ENCODE measurements at regions of chr1 and their contacts with region 1.

Region 1: DNA sequence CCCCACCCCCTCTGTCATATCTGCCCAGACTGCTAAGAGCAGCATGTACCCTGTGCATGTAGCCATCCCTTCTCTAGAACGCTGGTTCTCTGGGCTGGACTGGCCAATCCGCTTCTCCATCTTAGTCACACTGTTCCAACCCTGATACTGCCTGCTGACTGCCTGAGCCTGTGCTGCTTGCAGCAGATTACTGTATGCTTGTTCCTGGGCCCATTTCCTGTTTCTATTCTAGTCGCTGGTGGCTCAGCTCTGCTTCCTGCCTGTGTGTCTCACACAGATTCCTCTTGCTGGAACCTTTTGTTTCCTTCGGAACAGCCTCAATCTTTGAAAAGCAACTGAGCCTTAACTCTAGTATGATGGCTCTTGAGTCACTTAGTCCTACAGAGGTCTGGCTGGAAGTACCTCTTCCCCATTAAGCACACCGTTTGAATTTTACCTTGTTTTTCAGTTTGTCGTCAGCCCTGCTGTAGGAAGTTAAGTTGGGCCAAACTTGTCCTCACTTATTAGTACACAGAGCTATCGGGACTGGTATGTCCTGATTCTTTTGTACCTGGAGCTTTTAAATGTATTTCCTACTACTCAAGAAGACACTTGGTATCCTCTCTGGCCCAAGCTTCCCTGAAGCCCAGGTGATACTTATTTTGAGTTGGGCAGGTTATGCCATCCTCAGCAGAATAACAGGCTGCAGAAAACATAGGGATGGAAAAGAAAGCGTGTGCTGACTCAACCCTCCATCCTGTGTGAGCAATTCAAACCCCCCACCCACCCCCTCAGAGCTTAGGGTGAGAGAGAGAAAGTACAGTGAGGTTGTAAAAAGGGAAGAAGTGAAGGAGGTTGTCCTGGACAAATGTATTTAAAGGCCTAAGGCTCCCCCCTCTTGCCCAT is 43.4 kb upstream of the PIGV start:
- DNase-seq: peak; percentile 53 to 96 (median 70)
- ATAC-seq: peak; percentile 94
- H3K4me3 ChIP-seq: peak overlapping the region; percentile 27
- H3K4me3 Mint-ChIP-seq: peak overlapping the region; percentile 57
- H3K27ac ChIP-seq: peak overlapping the region; percentile 72 to 80
- H3K27ac Mint-ChIP-seq: peak overlapping the region; percentile 87
- H3K4me1 ChIP-seq: peaks cover 88% of the 10 kb centered on the region
- H3K4me1 Mint-ChIP-seq: peaks cover 89% of the 10 kb centered on the region
- H3K27me3 ChIP-seq: no peaks in the 10 kb centered on the region
- H3K27me3 Mint-ChIP-seq: no peaks in the 10 kb centered on the region
- CTCF ChIP-seq: no peak

Region 2: GRCh38 chr1:26723013-26723991 is 21.0 kb before region 1 on chr1:
- CTCF ChIA-PET with region 1: interaction called, 12 read pairs
- POLR2A ChIA-PET with region 1: interaction called, 19 read pairs
- intact Hi-C with region 1: loop called in 1 of 2 experiments (anchors 2 kb)
- DNase-seq: peak; percentile 6 to 81 (median 37)
- ATAC-seq: peak; percentile 77
- H3K4me3 ChIP-seq: peak overlapping the region; percentile 23
- H3K4me3 Mint-ChIP-seq: peak overlapping the region; percentile 83
- H3K27ac ChIP-seq: peak overlapping the region; percentile 25 to 62
- H3K27ac Mint-ChIP-seq: peak overlapping the region; percentile 85
- H3K4me1 ChIP-seq: peaks cover 75% of the 10 kb centered on the region
- H3K4me1 Mint-ChIP-seq: peaks cover 91% of the 10 kb centered on the region
- H3K27me3 ChIP-seq: no peaks in the 10 kb centered on the region
- H3K27me3 Mint-ChIP-seq: no peaks in the 10 kb centered on the region
- CTCF ChIP-seq: no peak

Region 3: GRCh38 chr1:26728645-26729044 is 15.7 kb before region 1 on chr1:
- CTCF ChIA-PET with region 1: interaction called, 12 read pairs
- POLR2A ChIA-PET with region 1: interaction called, 19 read pairs
- intact Hi-C with region 1: loop called in 1 of 2 experiments (anchors 2 kb)
- DNase-seq: no peak
- ATAC-seq: no peak
- H3K4me3 ChIP-seq: no peak overlapping the region
- H3K4me3 Mint-ChIP-seq: no peak overlapping the region
- H3K27ac ChIP-seq: peak overlapping the region in 1 of 2 donors; percentile 31
- H3K27ac Mint-ChIP-seq: peak overlapping the region; percentile 85
- H3K4me1 ChIP-seq: peaks cover 59% of the 10 kb centered on the region
- H3K4me1 Mint-ChIP-seq: peaks cover 99% of the 10 kb centered on the region
- H3K27me3 ChIP-seq: no peaks in the 10 kb centered on the region
- H3K27me3 Mint-ChIP-seq: no peaks in the 10 kb centered on the region
- CTCF ChIP-seq: no peak

Region 4: GRCh38 chr1:26733982-26734381 is 10.3 kb before region 1 on chr1:
- CTCF ChIA-PET with region 1: interaction called, 12 read pairs
- POLR2A ChIA-PET with region 1: interaction called, 19 read pairs
- intact Hi-C with region 1: no loop called
- DNase-seq: peak in 4 of 14 experiments; percentile 25 to 59 (median 50)
- ATAC-seq: peak; percentile 52
- H3K4me3 ChIP-seq: no peak overlapping the region
- H3K4me3 Mint-ChIP-seq: no peak overlapping the region
- H3K27ac ChIP-seq: no peak overlapping the region
- H3K27ac Mint-ChIP-seq: peak overlapping the region; percentile 84
- H3K4me1 ChIP-seq: peaks cover 50% of the 10 kb centered on the region
- H3K4me1 Mint-ChIP-seq: peaks cover 68% of the 10 kb centered on the region
- H3K27me3 ChIP-seq: no peaks in the 10 kb centered on the region
- H3K27me3 Mint-ChIP-seq: no peaks in the 10 kb centered on the region
- CTCF ChIP-seq: no peak